ENCODE measurements at regions of chr3 and their contacts with region 1.

Region 1: DNA sequence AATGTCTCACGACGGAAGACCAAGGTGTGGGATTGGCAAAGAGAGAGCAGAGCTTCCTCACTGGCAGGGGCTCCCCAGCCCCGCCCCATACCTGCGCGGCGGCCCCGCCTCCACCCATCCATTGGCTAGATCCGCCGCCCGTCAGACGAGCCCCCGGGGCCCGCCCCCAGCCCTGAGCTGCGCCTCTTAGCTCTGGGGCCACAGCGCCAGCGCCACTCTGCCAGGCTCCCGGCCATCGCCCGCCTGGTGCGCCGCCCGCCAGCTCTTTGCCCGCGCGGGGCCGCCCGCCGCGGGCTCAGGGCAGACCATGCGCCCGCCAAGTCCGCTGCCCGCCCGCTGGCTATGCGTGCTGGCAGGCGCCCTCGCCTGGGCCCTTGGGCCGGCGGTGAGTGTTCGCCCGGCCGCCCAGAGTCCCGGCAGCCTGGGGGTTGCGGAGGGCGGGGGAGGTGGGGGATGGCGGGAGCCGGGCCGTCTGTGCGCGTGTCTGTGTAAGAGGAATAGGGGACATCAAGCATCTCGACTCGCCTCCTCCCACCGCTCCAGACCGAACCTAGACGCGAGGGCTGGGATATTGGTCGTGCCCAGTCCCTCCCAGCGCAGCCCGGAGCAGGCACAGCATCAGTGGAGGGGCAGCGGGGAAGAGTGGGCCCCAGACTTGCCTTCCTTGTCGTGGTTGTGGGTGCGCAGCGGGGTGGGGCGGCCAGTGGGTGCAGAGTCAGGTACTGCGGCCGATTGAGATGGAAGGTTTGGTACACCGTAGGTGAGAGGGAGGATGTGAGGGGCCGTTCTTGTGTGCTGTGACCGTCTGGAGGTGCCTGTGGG is at the start of gene VIPR1:
- DNase-seq: peak; percentile 91
- ATAC-seq: peak; percentile 99
- H3K4me3 Mint-ChIP-seq: peak within 1 kb of the TSS; percentile 91
- H3K27ac Mint-ChIP-seq: peak within 1 kb of the TSS; percentile 70
- H3K4me1 Mint-ChIP-seq: peaks cover 22% of the 10 kb centered on the region
- H3K27me3 Mint-ChIP-seq: peaks cover 24% of the 10 kb centered on the region
- CTCF ChIP-seq: no peak
- total RNA-seq, gene VIPR1: 3.2 and 3.6 TPM in 2 replicates

Region 2: DNA sequence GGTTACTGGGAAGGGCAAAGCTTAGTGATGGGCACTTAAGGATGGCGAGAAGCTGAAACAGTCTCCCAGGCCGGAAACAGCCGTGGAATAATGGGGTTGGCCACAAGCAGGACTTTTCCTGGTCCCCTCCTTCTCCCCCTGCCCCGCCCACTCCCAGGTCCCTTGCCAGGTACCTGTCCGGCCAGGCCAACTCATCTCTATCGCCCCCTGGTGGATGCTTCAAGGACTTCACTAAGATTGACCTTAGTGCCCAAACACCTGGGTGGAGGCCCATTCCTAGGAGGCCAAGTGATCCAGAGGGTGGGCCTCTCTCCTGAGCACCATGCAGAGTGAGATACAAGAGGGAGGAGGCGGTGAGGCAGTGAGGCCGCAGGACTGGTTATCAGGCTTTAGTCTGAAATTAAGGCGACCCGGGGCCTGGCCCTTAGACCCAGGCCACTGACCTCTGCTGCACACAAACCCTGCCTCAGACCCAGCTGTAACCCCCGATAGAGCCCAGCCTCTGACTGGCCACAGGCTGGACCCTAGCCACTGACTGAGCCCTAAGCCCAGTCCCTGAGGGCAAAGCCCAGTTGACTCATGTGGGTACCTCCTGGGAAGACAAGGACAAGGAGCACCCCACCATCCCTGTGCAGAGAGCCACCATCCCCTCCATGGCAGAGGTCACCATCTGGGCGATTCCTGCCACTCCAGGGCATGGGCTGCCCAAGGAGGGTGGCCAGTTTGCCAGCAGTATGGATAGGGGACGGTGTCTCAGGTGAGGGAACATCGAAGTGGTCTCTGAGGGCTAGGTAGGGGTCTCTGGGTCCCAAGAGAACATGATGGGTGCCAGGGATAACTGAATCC is 37.5 kb after region 1 on chr3:
- CTCF ChIA-PET with region 1: interaction called, 6 read pairs
- POLR2A ChIA-PET with region 1: no interaction called
- intact Hi-C with region 1: loop called (anchors 2 kb)
- DNase-seq: peak; percentile 41
- ATAC-seq: peak; percentile 64
- H3K4me3 Mint-ChIP-seq: no peak overlapping the region
- H3K27ac Mint-ChIP-seq: no peak overlapping the region
- H3K4me1 Mint-ChIP-seq: no peaks in the 10 kb centered on the region
- H3K27me3 Mint-ChIP-seq: peaks cover 4% of the 10 kb centered on the region
- CTCF ChIP-seq: peak; percentile 47

Region 3: DNA sequence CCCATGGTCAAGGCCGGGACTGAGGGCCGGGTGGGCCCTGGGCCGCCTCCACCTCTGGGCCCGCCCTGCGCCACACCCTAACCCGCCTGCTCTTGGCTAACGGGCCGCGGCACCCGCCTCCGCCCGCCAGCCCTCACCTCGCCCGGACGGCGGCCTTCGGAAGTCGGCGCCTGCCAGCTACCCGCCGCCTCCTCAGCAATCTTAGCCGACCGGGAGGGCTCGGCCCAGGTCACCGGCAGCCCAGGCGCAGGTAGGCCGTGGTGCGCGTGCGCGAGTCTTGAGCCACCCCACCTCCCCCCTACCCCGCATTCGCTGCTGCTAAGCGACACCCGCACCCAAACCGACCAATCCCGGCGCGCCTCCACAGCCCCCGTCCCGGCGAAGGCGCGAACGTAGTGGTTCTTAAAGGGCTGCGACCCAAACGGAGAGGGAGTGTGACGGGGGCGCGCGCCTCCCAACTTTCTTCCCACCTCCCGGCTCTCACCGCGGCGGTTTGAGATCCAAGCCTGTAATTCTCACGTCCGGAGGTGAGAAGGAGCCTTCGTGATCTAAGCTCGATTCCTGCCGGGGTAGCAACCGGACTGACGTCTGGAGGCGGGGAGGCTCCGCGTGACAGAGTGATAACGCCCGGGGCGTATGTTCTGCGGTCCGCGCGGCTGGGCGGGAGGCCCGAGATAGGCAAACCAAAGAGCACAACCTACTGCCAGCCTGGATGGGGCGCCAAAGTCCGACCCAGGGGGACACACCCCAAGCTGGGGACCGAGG is 79.3 kb after region 1 on chr3 and contains the start of gene SEC22C:
- CTCF ChIA-PET with region 1: no interaction called
- POLR2A ChIA-PET with region 1: no interaction called
- intact Hi-C with region 1: loop called (anchors 5 kb)
- DNase-seq: peak; percentile 92
- ATAC-seq: peak; percentile 92
- H3K4me3 Mint-ChIP-seq: peak within 1 kb of the TSS; percentile 94
- H3K27ac Mint-ChIP-seq: peak within 1 kb of the TSS; percentile 97
- H3K4me1 Mint-ChIP-seq: peaks cover 29% of the 10 kb centered on the region
- H3K27me3 Mint-ChIP-seq: no peaks in the 10 kb centered on the region
- CTCF ChIP-seq: no peak
- total RNA-seq, gene SEC22C: 36.4 and 38.3 TPM in 2 replicates

Region 4: GRCh38 chr3:42635111-42635510 is 132.5 kb after region 1 on chr3:
- CTCF ChIA-PET with region 1: no interaction called
- POLR2A ChIA-PET with region 1: no interaction called
- intact Hi-C with region 1: loop called (anchors 1 kb)
- DNase-seq: no peak
- ATAC-seq: peak; percentile 88
- H3K4me3 Mint-ChIP-seq: no peak overlapping the region
- H3K27ac Mint-ChIP-seq: no peak overlapping the region
- H3K4me1 Mint-ChIP-seq: peaks cover 3% of the 10 kb centered on the region
- H3K27me3 Mint-ChIP-seq: no peaks in the 10 kb centered on the region
- CTCF ChIP-seq: no peak

Region 5: DNA sequence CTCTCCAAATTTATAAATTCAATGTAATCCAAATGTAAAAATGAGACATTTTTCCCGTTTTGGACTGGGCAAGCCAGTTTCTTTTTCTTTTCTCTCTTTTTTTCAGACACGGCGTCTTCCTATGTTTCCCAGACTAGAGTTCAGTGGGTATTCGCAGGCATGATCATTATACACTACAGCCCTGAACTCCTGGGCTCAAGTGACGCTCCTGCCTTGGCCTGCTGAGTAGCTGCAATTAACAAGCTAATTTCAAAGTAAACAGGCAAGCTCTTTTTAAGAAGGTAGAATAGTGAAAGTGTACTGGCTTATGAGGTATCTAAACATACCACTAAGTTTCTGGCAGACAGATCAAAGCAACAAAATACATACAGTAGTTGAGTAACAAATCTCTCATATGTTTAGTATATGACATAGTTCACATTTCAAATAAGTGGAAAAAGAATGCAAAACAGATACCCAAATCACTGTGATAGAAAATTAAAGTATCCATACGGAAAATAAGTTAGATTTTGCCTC is 288.1 kb after region 1 on chr3:
- CTCF ChIA-PET with region 1: no interaction called
- POLR2A ChIA-PET with region 1: no interaction called
- intact Hi-C with region 1: no loop called
- DNase-seq: no peak
- ATAC-seq: no peak
- H3K4me3 Mint-ChIP-seq: no peak overlapping the region
- H3K27ac Mint-ChIP-seq: no peak overlapping the region
- H3K4me1 Mint-ChIP-seq: no peaks in the 10 kb centered on the region
- H3K27me3 Mint-ChIP-seq: no peaks in the 10 kb centered on the region
- CTCF ChIP-seq: no peak

Region 6: GRCh38 chr3:42880601-42881451 is 378.2 kb after region 1 on chr3:
- CTCF ChIA-PET with region 1: no interaction called
- POLR2A ChIA-PET with region 1: no interaction called
- intact Hi-C with region 1: loop called (anchors 5 kb)
- DNase-seq: peak; percentile 76
- ATAC-seq: peak; percentile 99
- H3K4me3 Mint-ChIP-seq: peak overlapping the region; percentile 80
- H3K27ac Mint-ChIP-seq: peak overlapping the region; percentile 36
- H3K4me1 Mint-ChIP-seq: peaks cover 10% of the 10 kb centered on the region
- H3K27me3 Mint-ChIP-seq: no peaks in the 10 kb centered on the region
- CTCF ChIP-seq: peak; percentile 81

Region 7: GRCh38 chr3:43733459-43734384 is 1231.1 kb after region 1 on chr3:
- CTCF ChIA-PET with region 1: no interaction called
- POLR2A ChIA-PET with region 1: no interaction called
- intact Hi-C with region 1: no loop called
- DNase-seq: no peak
- ATAC-seq: no peak
- H3K4me3 Mint-ChIP-seq: no peak overlapping the region
- H3K27ac Mint-ChIP-seq: no peak overlapping the region
- H3K4me1 Mint-ChIP-seq: no peaks in the 10 kb centered on the region
- H3K27me3 Mint-ChIP-seq: no peaks in the 10 kb centered on the region
- CTCF ChIP-seq: no peak